ENCODE measurements at regions of chr12 and their contacts with region 1.

Region 1: DNA sequence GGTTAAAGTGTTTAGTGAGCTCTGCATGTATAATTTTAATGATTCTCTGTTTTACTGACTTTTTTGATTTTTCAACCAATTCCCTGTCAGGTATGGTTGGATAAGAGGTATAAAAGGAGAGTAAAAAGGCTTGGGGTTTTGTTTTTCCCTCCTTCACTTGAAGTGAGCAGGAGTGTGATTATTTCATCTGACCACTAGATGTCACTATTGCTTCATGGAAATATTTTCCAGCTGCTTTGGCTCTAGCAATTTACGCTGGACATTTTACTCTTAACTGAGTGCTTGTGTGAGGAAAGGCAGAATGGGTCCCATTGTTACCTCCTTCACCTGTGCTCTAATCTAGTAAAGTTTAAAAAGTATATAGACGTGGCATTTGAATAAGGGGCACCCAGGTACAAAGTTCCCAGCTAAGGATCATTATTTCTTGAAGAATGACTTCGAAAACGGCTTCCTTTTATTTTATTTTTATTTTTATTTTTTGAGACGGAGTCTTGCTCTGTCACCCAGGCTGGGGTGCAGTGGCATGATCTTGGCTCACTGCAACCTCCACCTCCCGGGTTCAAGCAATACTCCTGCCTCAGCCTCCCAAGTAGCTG is 66.5 kb downstream of the TBC1D30 start:
- DNase-seq: peak; percentile 48
- CTCF ChIP-seq: peak; percentile 62

Region 2: GRCh38 chr12:64877363-64878004 is 13.5 kb before region 1 on chr12:
- CTCF ChIA-PET with region 1: interaction called, 37 read pairs
- POLR2A ChIA-PET with region 1: no interaction called
- DNase-seq: peak; percentile 63
- CTCF ChIP-seq: no peak

Region 3: GRCh38 chr12:65100140-65100539 is 209.2 kb after region 1 on chr12:
- CTCF ChIA-PET with region 1: interaction called, 38 read pairs
- POLR2A ChIA-PET with region 1: no interaction called
- DNase-seq: no peak
- CTCF ChIP-seq: no peak

Region 4: GRCh38 chr12:65106948-65107347 is 216.0 kb after region 1 on chr12:
- CTCF ChIA-PET with region 1: interaction called, 38 read pairs
- POLR2A ChIA-PET with region 1: no interaction called
- DNase-seq: peak; percentile 13
- CTCF ChIP-seq: peak; percentile 21

Region 5: DNA sequence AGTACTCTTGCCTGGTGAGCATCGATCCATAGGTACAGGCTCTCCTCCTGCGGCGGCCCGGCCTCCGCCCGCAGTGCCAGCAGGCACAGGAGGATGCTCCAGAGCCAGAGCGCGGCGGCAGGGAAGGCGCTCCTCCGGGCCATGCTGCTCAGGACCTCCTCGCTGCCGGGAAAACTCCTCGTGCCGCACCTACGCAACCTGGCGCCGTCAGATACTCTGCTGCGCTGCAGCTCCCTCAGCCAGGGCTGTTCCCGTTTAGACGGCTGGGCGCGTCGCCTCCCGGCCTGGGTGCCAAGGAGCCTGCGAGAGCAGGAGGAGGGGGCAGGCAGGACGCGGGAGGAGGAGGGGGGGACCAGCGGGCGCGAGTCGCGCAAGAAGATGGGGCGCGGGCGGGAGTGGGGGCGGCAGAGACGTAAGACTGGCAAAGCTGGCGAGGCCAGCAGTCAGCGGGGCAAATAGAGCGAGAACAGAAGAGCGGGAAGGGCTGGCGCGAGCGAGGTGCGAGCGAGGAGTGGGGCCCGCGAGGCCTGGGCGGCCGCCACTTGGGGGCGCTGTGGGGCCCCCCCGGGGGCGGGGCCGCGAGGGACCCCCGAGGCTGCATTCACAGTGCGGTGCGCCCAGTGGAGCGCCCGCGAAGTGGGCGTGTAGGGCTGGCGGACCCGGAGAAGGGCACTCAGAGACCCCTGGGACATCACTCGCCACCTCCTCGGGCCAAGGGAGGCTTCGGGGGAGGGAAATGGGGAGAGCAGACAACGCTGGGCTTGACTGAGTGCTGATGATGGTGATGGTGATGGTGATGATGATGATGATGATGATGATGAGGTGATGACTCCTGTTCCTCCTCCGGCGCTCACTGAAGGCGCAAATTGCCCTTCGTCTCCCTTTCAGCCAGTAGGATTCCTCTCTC is 230.3 kb after region 1 on chr12 and contains the start of gene WIF1:
- CTCF ChIA-PET with region 1: interaction called, 10 read pairs
- POLR2A ChIA-PET with region 1: no interaction called
- DNase-seq: peak; percentile 38
- CTCF ChIP-seq: peak; percentile 45

Region 6: DNA sequence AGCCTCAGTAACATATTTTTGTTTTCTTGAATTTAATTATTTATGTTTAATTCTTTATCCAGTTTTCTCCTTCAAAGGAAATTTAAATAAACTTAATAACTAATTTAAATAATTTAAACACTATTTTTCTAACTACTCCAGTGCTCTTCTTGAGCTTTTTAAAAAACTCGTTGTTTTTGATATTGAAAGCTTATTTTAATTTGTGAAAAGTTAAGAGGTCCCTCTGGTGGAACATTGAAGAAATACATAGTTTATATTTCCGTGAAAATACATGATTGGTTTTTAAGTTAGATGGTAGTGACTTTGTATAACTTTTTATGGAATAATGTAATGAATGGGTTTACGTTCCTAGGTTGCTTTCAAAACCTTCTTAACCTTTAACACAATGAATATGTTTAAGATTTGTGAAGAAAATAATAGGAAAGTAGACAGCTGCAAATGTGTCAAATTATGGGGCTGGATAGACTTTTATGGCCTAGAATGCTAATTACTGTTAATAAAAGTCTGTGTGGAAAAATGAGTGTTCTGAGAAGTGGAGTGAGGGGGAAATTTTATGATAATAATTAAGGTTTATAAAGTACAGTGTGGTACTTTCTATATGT is 341.6 kb after region 1 on chr12:
- CTCF ChIA-PET with region 1: interaction called, 30 read pairs
- POLR2A ChIA-PET with region 1: no interaction called
- DNase-seq: peak; percentile 14
- CTCF ChIP-seq: peak; percentile 12